Activated CD4-positive, alpha-beta T cell treated with anti-CD3 and anti-CD28 coated beads, Interleukin-2, amount 10 ng/mL, durations not matched to agents 7 days and 5 days (primary cell): ENCODE measurements at regions of chr12 and their contacts with region 1.

Region 1: DNA sequence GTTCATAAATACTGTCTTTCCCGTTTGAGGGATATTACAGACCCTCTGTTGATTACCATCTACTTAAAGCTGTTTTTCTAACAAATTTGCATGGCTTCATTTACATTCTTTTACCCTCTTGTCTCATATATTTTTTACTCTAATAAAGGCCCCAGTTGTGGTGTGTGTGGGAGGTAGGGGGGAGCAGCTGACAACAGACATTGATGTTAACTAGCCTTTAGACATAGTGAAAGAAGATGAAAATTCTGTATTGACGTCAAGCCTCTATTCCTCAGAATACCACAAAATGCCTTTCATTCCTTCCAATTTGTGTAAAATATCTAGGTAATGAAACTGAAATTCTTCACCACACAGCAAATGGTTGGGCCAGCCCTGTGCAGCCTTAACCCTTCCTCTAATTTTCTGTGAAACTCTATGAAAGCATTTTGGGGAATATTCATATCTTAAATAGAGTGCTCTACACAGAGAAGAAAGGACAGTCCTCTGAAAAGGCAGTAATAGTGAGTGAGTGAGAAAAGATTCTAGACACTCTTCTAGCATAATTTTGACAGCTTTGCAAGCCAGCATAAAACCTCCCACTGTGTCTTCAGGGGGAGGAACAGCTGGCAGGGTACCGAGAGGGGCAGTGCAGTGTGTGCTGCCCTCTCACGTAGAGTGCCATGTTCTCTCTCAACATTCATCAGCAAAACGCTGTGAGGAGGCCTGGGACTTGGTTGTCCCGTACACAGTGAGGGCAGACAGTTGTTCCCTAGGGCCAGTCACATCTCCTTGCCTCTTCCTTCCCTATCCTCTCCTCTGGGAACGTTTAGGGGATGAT is 20.1 kb upstream of the CERS5 start:
- DNase-seq: no peak
- H3K4me3 Mint-ChIP-seq: no peak overlapping the region
- H3K27ac Mint-ChIP-seq: peak overlapping the region; percentile 75
- H3K4me1 Mint-ChIP-seq: peaks cover 44% of the 10 kb centered on the region
- H3K27me3 Mint-ChIP-seq: no peaks in the 10 kb centered on the region

Region 2: DNA sequence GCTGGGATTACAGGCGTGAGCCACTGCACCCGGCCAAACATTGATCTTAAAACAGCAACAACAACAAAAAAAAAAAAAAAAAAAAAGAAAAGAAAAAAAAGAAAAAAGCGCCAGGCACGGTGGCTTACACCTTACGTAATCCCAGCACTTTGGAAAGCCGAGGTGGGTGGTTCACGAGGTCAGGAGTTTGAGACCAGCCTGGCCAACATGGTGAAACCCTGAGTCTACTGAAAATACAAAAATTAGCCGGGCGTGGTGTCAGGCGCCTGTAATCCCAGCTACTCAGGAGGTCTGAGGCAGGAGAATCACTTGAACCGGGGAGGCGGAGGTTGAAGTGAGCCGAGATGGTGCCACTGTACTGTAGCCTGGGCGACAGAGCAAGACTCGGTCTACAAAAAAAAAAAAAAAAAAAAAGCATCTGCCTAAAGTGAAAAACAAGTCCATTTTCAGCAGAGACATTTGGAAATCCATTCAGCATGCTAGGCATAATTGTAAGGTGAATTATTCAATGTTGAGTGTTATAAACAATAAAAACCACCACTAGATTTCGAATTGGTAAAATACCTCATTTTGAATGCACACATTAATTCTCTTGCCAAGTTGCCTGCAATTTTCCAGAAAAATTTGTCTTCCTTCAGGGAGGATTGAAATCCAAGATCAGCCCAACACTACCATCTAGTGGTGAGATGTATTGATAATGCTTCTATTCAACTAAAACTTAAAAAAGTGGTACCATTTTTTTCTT is 12.1 kb before region 1 on chr12:
- CTCF ChIA-PET with region 1: interaction called, 12 read pairs
- POLR2A ChIA-PET with region 1: no interaction called
- DNase-seq: peak; percentile 61
- H3K4me3 Mint-ChIP-seq: no peak overlapping the region
- H3K27ac Mint-ChIP-seq: no peak overlapping the region
- H3K4me1 Mint-ChIP-seq: peaks cover 3% of the 10 kb centered on the region
- H3K27me3 Mint-ChIP-seq: no peaks in the 10 kb centered on the region

Region 3: DNA sequence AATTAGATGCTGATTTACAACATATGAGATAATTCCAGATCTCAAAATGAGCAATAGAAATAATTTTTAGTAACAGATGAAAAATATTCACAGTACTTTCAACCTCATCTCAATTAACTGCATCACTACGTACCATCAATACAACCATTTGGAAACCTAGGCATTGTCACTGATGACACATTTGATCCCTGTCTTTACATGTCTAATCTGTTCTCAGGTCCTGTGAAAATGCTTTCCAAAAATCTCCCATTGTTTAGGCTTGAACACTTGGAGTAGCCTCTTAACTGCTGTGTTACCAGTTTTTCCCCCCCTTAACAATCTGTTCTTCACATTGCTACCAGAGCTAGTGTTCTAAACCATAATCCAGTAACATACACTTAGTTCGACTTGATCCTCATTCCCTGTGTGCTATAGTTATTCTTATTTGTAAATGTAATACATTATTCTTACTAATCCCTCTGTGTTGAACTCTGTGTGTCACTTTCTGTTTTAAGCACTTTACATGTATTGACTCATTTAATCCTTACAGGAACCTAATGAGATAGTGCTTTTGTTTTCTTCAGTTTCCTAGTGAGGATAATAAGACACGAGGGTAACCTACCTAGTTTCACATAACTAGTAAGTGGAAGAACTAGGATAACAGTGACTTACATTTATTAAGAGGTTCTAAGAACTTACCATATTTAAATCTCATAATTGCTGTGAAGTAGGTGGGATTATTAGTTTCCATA is 255.1 kb after region 1 on chr12:
- CTCF ChIA-PET with region 1: no interaction called
- POLR2A ChIA-PET with region 1: interaction called, 11 read pairs
- DNase-seq: no peak
- H3K4me3 Mint-ChIP-seq: no peak overlapping the region
- H3K27ac Mint-ChIP-seq: peak overlapping the region; percentile 19
- H3K4me1 Mint-ChIP-seq: peaks cover 13% of the 10 kb centered on the region
- H3K27me3 Mint-ChIP-seq: no peaks in the 10 kb centered on the region